OCI-LY7 (cell line): ENCODE measurements at regions of chr10 and their contacts with region 1.

Region 1: GRCh38 chr10:5446390-5446926 is 34.1 kb downstream of the NET1 start:
- DNase-seq: peak; percentile 87
- H3K4me3 ChIP-seq: peak overlapping the region; percentile 63
- H3K27ac ChIP-seq: no peak overlapping the region
- H3K4me1 ChIP-seq: peaks cover 32% of the 10 kb centered on the region
- CTCF ChIP-seq: no peak

Region 2: DNA sequence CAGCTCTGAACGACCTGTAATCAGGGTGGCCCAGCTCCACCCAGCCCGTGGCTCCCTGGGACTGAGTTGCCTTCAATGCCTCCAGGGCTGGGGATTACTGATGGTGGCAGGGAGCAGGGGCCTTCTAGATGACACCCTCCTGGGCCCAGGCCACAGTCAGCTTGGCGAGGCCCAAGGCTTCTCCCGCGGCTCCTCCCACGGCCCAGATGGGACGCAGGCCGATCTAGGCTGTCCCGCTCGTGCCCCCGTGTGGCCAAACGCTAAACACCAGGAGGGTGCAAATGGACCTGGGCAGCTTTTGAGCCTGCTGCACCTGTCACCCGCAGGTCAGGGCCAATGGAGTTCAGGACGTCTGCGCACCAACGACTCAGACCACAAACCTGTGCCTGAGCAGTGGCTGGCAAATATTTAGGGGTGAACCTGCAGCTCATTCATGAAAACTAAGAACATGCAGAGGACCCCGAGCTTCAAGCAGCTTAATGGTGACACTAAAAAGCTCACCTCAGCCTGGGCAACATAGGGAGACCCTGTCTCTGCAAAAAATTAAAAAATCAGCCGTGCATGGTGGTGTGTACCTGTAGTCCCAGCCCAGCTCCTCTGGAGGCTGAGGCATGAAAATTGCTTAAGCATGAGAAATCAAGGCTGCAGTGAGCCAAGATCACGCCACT is 176.8 kb after region 1 on chr10:
- CTCF ChIA-PET with region 1: interaction called, 13 read pairs
- POLR2A ChIA-PET with region 1: interaction called, 7 read pairs
- intact Hi-C with region 1: loop called (anchors 1 kb)
- DNase-seq: peak; percentile 89
- H3K4me3 ChIP-seq: no peak overlapping the region
- H3K27ac ChIP-seq: no peak overlapping the region
- H3K4me1 ChIP-seq: peaks cover 6% of the 10 kb centered on the region
- CTCF ChIP-seq: peak; percentile 95

Region 3: DNA sequence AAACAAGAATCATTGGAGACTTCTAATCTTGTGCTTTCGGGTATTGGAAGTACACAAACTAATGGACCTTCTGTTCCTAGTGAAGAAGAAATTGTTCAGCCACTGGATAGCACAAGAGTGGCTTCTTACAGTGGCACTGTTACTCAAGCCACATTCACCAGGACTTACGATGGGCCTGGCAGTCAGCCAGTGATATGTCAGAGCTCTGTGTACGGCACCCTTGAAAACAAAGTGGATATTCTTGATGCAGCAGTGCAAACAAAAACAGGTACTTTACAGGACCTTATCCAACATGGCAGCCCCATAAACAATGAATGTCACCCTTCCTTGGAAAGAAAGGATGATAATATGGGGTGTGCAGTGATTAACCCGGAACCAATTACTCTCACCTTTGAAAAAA is 299.7 kb after region 1 on chr10:
- CTCF ChIA-PET with region 1: no interaction called
- POLR2A ChIA-PET with region 1: no interaction called
- intact Hi-C with region 1: loop called (anchors 10 kb)
- DNase-seq: no peak
- H3K4me3 ChIP-seq: no peak overlapping the region
- H3K27ac ChIP-seq: no peak overlapping the region
- H3K4me1 ChIP-seq: peaks cover 9% of the 10 kb centered on the region
- CTCF ChIP-seq: no peak

Region 4: DNA sequence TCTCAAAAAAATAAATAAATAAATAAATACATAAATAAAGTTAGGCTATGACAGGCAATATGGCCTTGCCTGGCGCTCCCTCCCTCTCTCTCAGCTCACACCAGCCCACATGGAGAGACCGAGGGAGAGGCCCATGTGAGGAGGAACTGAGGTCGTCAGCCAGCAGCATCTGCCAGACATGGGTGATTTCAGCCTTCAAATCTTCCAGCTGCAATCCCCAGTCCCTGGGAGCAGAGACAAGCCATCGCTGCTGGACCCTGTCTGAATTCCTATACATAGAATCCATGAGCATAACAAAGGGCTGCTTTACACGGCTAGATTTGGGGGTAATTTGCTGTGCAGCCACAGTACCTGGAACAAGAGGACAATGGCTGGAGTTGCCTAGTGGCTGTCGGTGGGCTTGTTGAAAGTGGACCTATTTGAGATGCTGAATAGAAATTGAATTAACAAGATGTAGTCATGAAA is 407.7 kb after region 1 on chr10:
- CTCF ChIA-PET with region 1: no interaction called
- POLR2A ChIA-PET with region 1: no interaction called
- intact Hi-C with region 1: no loop called
- DNase-seq: no peak
- H3K4me3 ChIP-seq: no peak overlapping the region
- H3K27ac ChIP-seq: no peak overlapping the region
- H3K4me1 ChIP-seq: peaks cover 22% of the 10 kb centered on the region
- CTCF ChIP-seq: no peak

Region 5: DNA sequence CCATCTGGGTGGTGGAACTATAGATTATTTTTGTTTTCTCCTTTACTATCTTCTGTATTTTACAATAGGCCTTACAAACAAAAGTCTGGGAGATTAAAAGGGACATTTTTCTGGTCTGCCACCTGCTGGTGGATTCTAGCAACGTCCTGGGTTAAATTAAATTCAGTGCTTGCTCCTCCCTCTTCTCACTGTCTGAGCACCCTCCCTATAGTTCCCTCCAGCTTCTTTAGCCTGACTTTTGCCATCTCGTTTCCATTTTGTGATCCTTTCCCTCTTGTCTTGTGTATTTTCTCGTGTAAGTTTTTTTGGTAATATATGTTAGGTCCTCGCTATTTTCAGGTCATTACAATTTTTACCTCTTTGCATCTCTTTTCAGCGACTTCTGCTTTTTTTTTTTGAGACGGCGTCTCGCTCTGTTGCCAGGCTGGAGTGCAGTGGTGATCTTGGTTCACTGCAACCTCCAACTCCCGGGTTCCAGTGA is 427.1 kb after region 1 on chr10:
- CTCF ChIA-PET with region 1: no interaction called
- POLR2A ChIA-PET with region 1: no interaction called
- intact Hi-C with region 1: loop called (anchors 10 kb)
- DNase-seq: peak; percentile 79
- H3K4me3 ChIP-seq: no peak overlapping the region
- H3K27ac ChIP-seq: no peak overlapping the region
- H3K4me1 ChIP-seq: peaks cover 10% of the 10 kb centered on the region
- CTCF ChIP-seq: peak; percentile 86

Region 6: GRCh38 chr10:5977471-5978229 is 531.2 kb after region 1 on chr10 and contains the start of gene IL15RA:
- CTCF ChIA-PET with region 1: no interaction called
- POLR2A ChIA-PET with region 1: no interaction called
- intact Hi-C with region 1: loop called (anchors 5 kb)
- DNase-seq: peak; percentile 81
- H3K4me3 ChIP-seq: peak within 1 kb of the TSS; percentile 89
- H3K27ac ChIP-seq: peak within 1 kb of the TSS; percentile 33
- H3K4me1 ChIP-seq: peaks cover 19% of the 10 kb centered on the region
- CTCF ChIP-seq: peak; percentile 58
- total RNA-seq, gene IL15RA: 5.5 and 14.5 TPM in 2 replicates